Activated CD4-positive, alpha-beta T cell treated with anti-CD3 and anti-CD28 coated beads for 36 hours (primary cell): ENCODE measurements at regions of chr19 and their contacts with region 1.

Region 1: DNA sequence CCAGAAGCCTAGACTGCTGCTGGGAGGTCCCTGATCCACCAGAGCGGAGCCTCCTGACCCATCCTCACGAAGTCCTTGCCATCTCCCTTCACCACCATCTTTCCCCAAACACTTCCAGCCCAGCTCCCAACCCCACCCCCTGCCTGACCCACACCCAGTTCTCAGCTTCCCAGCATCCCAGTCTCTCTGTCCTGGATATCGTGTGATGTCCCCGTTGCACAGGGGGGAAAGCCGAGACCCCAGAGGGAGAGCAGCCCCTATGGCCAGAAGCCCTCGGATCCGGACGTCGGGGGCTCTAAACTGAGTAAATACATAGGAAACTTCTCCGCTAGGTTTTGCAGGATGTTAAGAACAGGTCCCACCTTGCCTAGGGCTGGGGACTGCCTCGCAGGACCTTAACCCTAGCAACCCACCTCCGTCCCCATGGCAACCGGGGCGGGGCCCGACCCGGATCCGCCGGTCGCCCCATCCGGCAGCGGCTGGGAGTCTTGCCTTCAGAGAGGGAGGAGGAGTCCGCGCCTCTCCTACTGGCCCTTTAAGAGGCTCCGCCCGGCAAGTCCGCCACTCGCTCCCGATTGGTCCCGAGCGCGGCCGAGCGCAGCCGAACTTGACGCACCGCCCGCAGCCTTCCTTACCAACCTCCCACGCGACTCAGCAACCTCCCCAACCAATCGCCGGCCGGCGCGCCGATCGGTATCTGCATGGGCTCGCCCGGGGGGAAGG is 451 bp upstream of the HMG20B start:
- DNase-seq: peak; percentile 100
- ATAC-seq: peak; percentile 96
- H3K4me3 Mint-ChIP-seq: peak overlapping the region; percentile 73
- H3K27ac Mint-ChIP-seq: no peak overlapping the region
- H3K4me1 Mint-ChIP-seq: peaks cover 11% of the 10 kb centered on the region
- H3K27me3 Mint-ChIP-seq: no peaks in the 10 kb centered on the region

Region 2: DNA sequence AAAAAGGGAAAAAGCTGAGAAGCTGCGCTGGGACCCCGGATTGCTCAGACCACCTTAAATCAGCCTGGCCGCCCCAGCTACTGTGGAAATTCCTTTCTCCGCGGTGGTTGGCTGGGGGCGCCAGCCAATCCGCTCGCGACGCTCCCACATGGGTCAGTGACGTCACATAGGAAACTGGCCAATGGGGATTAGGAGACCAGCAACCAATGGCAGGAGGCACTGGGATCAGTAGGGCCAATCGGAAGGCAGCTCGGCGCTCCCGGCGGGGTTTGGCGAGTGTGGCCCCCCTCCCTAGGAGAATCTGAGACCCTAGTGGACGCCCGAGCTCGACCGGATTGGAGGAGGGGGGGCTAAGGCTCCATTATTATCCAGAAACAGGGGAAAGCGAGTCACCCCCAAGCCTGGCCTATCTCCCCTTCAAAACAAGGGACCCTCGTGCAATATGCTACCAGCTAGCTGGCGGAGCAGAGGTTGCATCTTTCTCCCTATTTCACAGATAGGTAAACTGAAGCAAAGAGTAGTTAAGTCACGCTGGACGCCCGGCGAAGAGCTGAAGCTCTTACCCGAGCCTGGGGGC is 536.7 kb before region 1 on chr19:
- CTCF ChIA-PET with region 1: no interaction called
- POLR2A ChIA-PET with region 1: no interaction called
- intact Hi-C with region 1: loop called in 1 of 2 experiments (anchors 5 kb)
- DNase-seq: peak; percentile 97
- ATAC-seq: peak; percentile 94
- H3K4me3 Mint-ChIP-seq: peak overlapping the region; percentile 83
- H3K27ac Mint-ChIP-seq: peak overlapping the region; percentile 96
- H3K4me1 Mint-ChIP-seq: peaks cover 19% of the 10 kb centered on the region
- H3K27me3 Mint-ChIP-seq: no peaks in the 10 kb centered on the region

Region 3: DNA sequence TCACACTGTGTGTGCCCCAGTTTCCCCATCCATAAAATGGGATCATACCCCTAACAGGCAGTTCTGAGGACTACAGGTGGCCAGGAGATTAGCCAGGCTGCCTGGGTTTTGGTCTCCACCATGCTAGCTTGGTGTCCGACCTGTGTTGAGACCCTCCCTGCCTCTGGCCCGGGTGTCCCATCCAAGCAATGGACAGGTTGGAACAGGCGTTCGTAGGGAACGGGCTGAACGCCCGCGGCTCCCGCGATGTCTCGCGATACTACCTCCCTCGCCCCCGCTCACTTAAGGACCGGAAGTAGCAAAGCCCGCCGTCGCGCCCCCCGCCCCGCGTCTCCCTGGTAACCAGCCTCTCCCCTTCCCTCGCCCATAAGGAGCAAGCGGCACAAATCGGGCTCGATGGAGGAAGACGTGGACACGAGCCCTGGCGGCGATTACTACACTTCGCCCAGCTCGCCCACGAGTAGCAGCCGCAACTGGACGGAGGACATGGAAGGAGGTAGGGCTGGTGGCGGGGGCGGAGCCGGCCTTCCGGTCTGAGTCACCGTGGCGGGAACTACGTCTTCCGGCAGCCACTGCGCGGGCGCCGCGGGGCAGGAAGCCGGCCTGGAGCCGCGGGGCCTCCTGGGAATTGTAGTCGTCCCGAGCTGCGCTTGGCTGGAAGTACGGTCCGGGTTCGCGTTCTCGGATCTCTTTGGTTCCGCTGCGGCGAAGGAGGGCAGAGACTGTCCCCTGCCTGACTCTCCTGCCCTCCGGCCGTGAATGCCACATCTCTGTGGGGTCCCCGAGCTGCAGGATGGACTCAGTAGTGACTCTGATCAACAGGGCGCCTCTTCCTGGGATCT is 137.4 kb before region 1 on chr19:
- CTCF ChIA-PET with region 1: no interaction called
- POLR2A ChIA-PET with region 1: no interaction called
- intact Hi-C with region 1: loop called in 1 of 2 experiments (anchors 1 kb)
- DNase-seq: peak; percentile 98
- ATAC-seq: peak; percentile 96
- H3K4me3 Mint-ChIP-seq: peak overlapping the region; percentile 84
- H3K27ac Mint-ChIP-seq: peak overlapping the region; percentile 99
- H3K4me1 Mint-ChIP-seq: peaks cover 13% of the 10 kb centered on the region
- H3K27me3 Mint-ChIP-seq: no peaks in the 10 kb centered on the region

Region 4: DNA sequence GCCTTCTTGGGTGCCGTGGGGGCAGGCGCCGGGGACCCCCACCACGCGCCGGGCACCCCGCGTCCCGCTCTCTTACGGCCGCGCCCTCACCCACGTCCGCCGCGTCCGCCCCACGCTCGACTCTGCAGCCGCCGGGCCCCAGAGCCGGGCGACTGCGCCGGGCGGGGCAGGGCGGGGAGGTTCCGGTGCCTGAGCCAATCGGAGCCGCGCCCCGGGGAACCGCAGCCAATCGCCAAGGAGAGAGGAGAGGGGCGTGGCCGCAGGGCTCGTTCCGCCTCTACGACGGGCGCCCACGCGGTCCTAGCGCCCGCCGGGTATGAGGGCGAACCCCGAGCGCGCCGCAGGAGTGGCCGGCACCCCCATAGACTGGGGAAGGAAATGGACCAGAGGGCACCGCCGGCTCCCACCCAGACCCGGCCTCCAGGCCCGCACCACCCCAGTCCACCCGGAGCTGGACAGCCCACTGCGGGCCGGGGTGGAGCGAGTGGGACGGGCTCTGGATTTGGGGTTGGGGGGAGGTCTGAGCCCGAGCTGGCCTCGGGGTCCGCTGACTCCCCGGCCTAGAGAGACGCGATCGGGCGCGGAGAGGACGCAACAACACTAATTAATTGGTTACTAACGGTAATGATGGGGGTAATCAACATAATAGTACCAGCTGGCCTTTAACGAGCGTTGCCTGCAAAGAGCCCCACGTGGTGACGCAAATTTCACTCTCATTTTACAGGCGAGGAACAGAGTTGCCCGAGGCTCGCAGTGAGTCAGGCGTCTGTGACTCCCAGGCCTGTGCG is 14.6 kb before region 1 on chr19 and contains the start of gene MFSD12:
- CTCF ChIA-PET with region 1: interaction called, 4 read pairs
- POLR2A ChIA-PET with region 1: interaction called, 3 read pairs
- intact Hi-C with region 1: loop called (anchors 1 kb)
- DNase-seq: peak; percentile 97
- ATAC-seq: peak; percentile 89
- H3K4me3 Mint-ChIP-seq: peak within 1 kb of the TSS; percentile 96
- H3K27ac Mint-ChIP-seq: peak within 1 kb of the TSS; percentile 92
- H3K4me1 Mint-ChIP-seq: peaks cover 36% of the 10 kb centered on the region
- H3K27me3 Mint-ChIP-seq: no peaks in the 10 kb centered on the region
- total RNA-seq, gene MFSD12: 44.7 to 46.7 TPM

Region 5: DNA sequence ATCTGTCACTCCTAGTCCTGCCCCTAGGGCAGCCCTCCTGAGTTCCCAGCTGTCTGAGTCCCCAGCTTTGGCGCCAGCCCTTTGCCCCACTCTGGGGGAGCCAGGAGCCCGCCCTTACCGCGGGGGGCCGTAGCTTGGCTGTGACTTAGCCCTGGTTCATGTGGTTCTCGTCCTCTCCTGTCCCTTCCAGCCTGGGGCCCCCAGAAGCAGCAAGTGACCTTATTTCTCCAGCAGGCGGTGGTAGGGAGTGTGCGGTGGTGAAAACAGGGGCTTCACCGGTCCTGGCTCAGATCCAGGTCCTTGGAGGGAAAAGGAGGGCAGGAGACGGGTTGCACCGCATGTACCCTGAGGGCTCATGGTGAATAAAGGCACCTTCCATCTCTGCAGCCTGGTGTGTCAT is 20.9 kb after region 1 on chr19:
- CTCF ChIA-PET with region 1: no interaction called
- POLR2A ChIA-PET with region 1: no interaction called
- intact Hi-C with region 1: no loop called
- DNase-seq: no peak
- ATAC-seq: no peak
- H3K4me3 Mint-ChIP-seq: no peak overlapping the region
- H3K27ac Mint-ChIP-seq: no peak overlapping the region
- H3K4me1 Mint-ChIP-seq: no peaks in the 10 kb centered on the region
- H3K27me3 Mint-ChIP-seq: no peaks in the 10 kb centered on the region

Region 6: DNA sequence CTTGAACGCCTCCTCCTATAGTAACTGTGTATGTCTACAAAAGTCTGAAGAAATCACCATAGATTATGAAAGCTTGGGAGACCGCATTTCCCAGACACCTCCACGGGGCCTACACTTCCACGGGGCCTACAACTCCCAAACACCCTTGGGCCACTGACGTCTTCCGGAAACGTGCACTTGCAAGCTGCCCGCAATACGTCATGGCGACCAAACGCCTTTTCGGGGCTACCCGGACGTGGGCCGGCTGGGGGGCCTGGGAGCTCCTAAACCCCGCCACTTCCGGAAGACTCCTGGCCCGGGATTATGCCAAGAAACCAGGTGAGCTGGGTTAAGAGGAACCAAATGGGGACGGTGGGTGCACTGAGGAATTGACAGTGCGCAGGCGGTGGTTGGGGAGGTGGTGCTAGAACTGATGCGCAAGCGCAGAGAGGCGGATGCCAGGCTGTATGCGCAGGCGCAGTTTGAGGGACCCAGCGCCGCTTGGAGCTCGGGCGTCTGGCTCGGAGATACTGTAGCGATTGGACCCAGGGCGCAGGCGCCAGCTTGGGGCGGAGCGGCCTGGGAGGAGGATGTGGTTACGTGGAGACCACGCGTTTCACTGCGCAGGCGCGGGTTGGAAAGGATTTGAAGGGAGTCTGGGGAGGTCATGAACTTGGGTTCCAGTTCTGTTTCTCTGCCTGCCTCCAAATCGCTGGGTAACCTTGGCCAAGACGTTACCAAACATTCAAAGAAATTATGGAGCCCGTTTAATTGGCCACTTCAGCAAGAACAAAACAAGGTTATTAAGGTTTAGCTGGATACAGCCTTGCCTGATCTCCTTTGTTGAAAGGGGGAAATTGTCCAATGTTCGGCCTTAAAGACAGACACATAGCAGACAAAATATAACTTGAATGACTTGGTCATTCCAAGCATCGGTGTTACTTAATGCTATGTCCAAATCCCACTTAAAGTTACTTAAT is 190.5 kb after region 1 on chr19 and contains the start of gene MRPL54:
- CTCF ChIA-PET with region 1: no interaction called
- POLR2A ChIA-PET with region 1: no interaction called
- intact Hi-C with region 1: loop called in 1 of 2 experiments (anchors 1 kb)
- DNase-seq: peak; percentile 100
- ATAC-seq: peak; percentile 88
- H3K4me3 Mint-ChIP-seq: peak within 1 kb of the TSS; percentile 100
- H3K27ac Mint-ChIP-seq: peak within 1 kb of the TSS; percentile 99
- H3K4me1 Mint-ChIP-seq: peaks cover 39% of the 10 kb centered on the region
- H3K27me3 Mint-ChIP-seq: no peaks in the 10 kb centered on the region
- total RNA-seq, gene MRPL54: 54.8 to 63.9 TPM

Region 7: GRCh38 chr19:4007021-4007835 is 434.9 kb after region 1 on chr19 and contains the start of gene PIAS4:
- CTCF ChIA-PET with region 1: no interaction called
- POLR2A ChIA-PET with region 1: no interaction called
- intact Hi-C with region 1: loop called in 1 of 2 experiments (anchors 1 kb)
- DNase-seq: peak; percentile 97
- ATAC-seq: peak; percentile 92
- H3K4me3 Mint-ChIP-seq: peak within 1 kb of the TSS; percentile 75
- H3K27ac Mint-ChIP-seq: peak within 1 kb of the TSS; percentile 71
- H3K4me1 Mint-ChIP-seq: peaks cover 27% of the 10 kb centered on the region
- H3K27me3 Mint-ChIP-seq: no peaks in the 10 kb centered on the region
- total RNA-seq, gene PIAS4: 23.0 to 37.3 TPM